BJ (cell line): ENCODE measurements at regions of chr11 and their contacts with region 1.

Region 1: GRCh38 chr11:45655347-45655756 is 10.1 kb downstream of the CHST1 start:
- DNase-seq: no peak
- H3K4me3 ChIP-seq: no peak overlapping the region
- H3K27me3 ChIP-seq: no peaks in the 10 kb centered on the region; the same call in 1 of the 2 replicates
- CTCF ChIP-seq: peak; percentile 96

Region 2: GRCh38 chr11:45371251-45372115 is 283.9 kb before region 1 on chr11:
- CTCF ChIA-PET with region 1: interaction called, 21 read pairs
- POLR2A ChIA-PET with region 1: no interaction called
- DNase-seq: no peak
- H3K4me3 ChIP-seq: no peak overlapping the region
- H3K27me3 ChIP-seq: peaks cover 9% of the 10 kb centered on the region
- CTCF ChIP-seq: peak; percentile 87

Region 3: GRCh38 chr11:45390407-45390806 is 264.9 kb before region 1 on chr11:
- CTCF ChIA-PET with region 1: no interaction called
- POLR2A ChIA-PET with region 1: no interaction called
- DNase-seq: no peak
- H3K4me3 ChIP-seq: no peak overlapping the region
- H3K27me3 ChIP-seq: peaks cover 3% of the 10 kb centered on the region; the same call in 1 of the 2 replicates
- CTCF ChIP-seq: no peak

Region 4: DNA sequence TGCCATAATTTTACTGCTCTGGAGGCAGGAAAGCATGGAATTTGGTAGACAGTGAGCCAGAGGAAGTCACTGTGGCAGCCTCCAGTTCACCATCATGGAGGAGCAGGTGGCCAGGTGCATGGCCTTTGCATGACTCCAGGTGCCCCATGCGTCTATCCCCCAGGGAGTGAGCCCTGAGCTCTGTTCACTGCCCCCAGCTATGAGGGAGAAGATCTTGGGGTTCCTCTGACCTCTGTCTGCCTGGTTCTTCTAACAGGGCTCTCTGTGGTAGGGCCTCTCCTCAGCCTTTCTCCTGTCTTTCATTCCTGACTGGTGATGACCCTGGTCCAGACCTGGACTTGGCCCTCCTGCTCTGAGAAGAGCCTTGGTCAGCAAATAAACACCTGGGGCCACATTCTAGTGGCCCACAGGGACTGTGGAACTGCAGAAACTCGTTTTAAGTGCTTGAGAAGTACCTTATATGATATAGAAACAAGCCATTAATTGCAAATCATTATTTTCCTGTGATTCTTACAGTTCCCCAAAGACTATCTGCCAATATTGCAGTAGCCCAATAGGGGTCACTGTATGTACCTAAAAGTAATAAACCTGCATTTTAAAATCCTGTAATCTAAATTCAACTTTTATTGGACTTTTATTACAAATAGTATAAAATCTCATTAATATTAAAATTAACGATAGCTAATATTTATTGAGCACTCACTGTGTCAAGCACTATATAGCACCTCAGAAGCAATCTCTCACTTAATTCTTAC is 249.3 kb before region 1 on chr11:
- CTCF ChIA-PET with region 1: interaction called, 15 read pairs
- POLR2A ChIA-PET with region 1: no interaction called
- DNase-seq: no peak
- H3K4me3 ChIP-seq: no peak overlapping the region
- H3K27me3 ChIP-seq: no peaks in the 10 kb centered on the region
- CTCF ChIP-seq: peak; percentile 42

Region 5: GRCh38 chr11:45556851-45557707 is 98.3 kb before region 1 on chr11:
- CTCF ChIA-PET with region 1: no interaction called
- POLR2A ChIA-PET with region 1: no interaction called
- DNase-seq: no peak
- H3K4me3 ChIP-seq: no peak overlapping the region
- H3K27me3 ChIP-seq: no peaks in the 10 kb centered on the region; the same call in 1 of the 2 replicates
- CTCF ChIP-seq: no peak

Region 6: GRCh38 chr11:45665206-45665932 is 10.0 kb after region 1 on chr11 and contains the start of gene CHST1:
- CTCF ChIA-PET with region 1: interaction called, 17 read pairs
- POLR2A ChIA-PET with region 1: no interaction called
- DNase-seq: no peak
- H3K4me3 ChIP-seq: peak within 1 kb of the TSS; percentile 28
- H3K27me3 ChIP-seq: peaks cover 36% of the 10 kb centered on the region
- CTCF ChIP-seq: no peak
- polyA plus RNA-seq, gene CHST1: 0.04 TPM in 1 of 2 replicates, not detected in the other